A549 (cell line): ENCODE measurements at regions of chr17 and their contacts with region 1.

Region 1: GRCh38 chr17:50169121-50169764 is 3.4 kb downstream of the SGCA start:
- DNase-seq: peak; percentile 59 to 85
- ATAC-seq: peak; percentile 49 to 77
- H3K4me3 ChIP-seq: no peak overlapping the region
- H3K27ac ChIP-seq: peak overlapping the region; percentile 41 to 55; a peak in 5 of 6 replicates
- H3K4me1 ChIP-seq: peaks cover 25% of the 10 kb centered on the region
- CTCF ChIP-seq: peak; percentile 97
- EP300 ChIP-seq: no peak
- POLR2A ChIP-seq: no peak
- RAD21 ChIP-seq: peak; percentile 98 to 99

Region 2: GRCh38 chr17:50114849-50115357 is 54.3 kb before region 1 on chr17:
- CTCF ChIA-PET with region 1: interaction called, 17 read pairs
- POLR2A ChIA-PET with region 1: no interaction called
- DNase-seq: peak; percentile 66 to 82
- ATAC-seq: peak; percentile 17 to 69; a peak in 4 of 6 replicates
- H3K4me3 ChIP-seq: no peak overlapping the region
- H3K27ac ChIP-seq: no peak overlapping the region
- H3K4me1 ChIP-seq: peaks cover 10% of the 10 kb centered on the region; the same call in 1 of the 3 replicates
- CTCF ChIP-seq: peak; percentile 76
- EP300 ChIP-seq: no peak
- POLR2A ChIP-seq: no peak
- RAD21 ChIP-seq: peak; percentile 66 to 83

Region 3: GRCh38 chr17:50184064-50184463 is 14.8 kb after region 1 on chr17:
- CTCF ChIA-PET with region 1: interaction called, 817 read pairs
- POLR2A ChIA-PET with region 1: no interaction called
- DNase-seq: no peak
- ATAC-seq: peak in 1 of 2 experiments; percentile 27; a peak in 3 of 6 replicates
- H3K4me3 ChIP-seq: no peak overlapping the region
- H3K27ac ChIP-seq: peak overlapping the region; percentile 37 to 67; a peak in 4 of 6 replicates
- H3K4me1 ChIP-seq: peaks cover 23% of the 10 kb centered on the region
- CTCF ChIP-seq: no peak
- EP300 ChIP-seq: no peak
- POLR2A ChIP-seq: no peak
- RAD21 ChIP-seq: no peak

Region 4: DNA sequence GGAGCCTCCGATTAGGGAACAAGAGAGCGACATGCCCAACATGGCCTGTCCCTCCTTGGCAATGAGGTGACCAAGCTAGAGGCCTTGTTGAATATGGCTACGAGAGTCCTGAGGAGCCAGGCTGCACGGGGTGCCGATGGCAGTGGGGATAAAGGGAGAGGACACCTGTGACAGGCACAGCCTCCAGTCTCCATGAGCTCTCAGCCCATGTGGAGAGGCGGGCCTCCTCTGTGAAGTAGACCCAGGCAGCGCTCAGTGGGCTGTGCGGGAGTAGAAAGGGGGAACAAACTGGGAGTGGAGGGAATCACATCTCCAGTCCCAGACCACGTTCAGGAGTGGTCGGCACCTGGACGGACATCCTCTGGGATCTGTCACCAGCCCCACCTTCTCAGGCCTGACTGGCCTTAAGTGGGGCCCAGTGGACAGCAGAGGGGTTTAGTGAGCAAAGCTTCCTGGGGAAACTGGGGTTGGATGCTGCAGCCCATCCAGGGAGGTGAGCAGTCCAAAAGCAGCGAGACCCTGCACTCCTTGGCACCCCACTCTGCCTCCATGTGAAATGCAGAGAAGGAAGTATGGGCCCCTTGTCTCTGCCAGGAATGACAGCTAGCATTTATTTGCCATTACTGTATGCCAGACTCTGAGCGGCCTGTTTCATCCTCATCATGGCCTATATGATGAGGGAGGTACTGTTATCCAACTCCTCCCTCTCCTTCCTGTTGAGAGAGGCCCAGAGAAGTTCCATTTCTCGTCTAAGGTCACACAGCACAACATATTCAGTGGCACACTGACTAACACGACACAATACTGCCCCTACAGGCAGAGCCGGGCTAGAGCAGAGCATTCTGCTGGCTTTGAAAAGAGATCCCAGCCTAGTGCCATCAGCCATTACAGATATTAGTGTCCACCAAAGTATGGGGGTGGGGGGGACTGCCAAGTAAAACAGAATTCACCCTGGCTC is 100.5 kb after region 1 on chr17:
- CTCF ChIA-PET with region 1: interaction called, 52 read pairs
- POLR2A ChIA-PET with region 1: no interaction called
- DNase-seq: peak; percentile 79 to 91
- ATAC-seq: peak; percentile 58 to 66
- H3K4me3 ChIP-seq: no peak overlapping the region
- H3K27ac ChIP-seq: peak overlapping the region in 1 of 2 experiments; percentile 36; a peak in 3 of 6 replicates
- H3K4me1 ChIP-seq: peaks cover 47% of the 10 kb centered on the region
- CTCF ChIP-seq: peak; percentile 93
- EP300 ChIP-seq: no peak
- POLR2A ChIP-seq: no peak
- RAD21 ChIP-seq: peak; percentile 79 to 90

Region 5: GRCh38 chr17:50318501-50319285 is 149.4 kb after region 1 on chr17:
- CTCF ChIA-PET with region 1: interaction called, 10 read pairs
- POLR2A ChIA-PET with region 1: no interaction called
- DNase-seq: no peak
- ATAC-seq: 0 out of 6 replicates have a peak, but pooled peaks of 1 of the 2 experiments have one; percentile 19
- H3K4me3 ChIP-seq: no peak overlapping the region
- H3K27ac ChIP-seq: no peak overlapping the region
- H3K4me1 ChIP-seq: no peaks in the 10 kb centered on the region
- CTCF ChIP-seq: no peak
- EP300 ChIP-seq: no peak
- POLR2A ChIP-seq: no peak
- RAD21 ChIP-seq: no peak